ENCODE measurements at regions of chrX and their contacts with region 1.

Region 1: DNA sequence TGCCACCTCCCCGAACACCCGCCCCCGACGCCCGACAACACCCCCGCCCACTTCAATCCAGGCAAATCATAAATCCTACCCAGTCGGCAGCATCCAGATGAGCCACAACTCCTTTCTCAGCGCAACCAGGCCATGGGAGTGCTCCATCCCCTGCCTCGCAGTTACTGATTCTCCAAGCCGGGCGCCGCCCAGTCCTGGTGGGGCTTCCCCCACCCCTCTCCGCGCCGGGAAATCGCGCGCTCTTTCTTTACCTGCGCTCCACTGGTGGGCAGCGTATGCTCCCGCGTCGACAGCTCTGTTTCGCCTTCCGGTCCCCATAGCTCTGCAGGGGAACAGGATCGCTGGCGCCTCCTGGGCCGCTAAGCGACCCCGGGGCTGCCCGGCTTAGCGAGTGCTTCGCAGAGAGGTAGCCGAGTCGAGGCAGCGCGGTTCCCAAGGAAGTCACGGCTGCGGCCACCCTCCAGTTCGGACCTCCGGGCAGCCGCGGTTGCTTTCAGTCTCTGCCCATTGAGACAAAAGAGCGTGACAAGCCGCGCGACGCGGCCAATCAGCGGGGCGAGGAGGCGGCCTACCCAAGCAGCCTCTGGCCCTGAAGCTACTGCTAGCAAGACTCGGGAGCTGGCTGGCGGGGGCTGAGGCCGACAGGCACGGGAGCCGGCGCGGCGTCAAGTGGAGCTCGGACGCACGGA is 43.7 kb upstream of the TMSB15B start:
- DNase-seq: peak; percentile 62
- CTCF ChIP-seq: no peak

Region 2: DNA sequence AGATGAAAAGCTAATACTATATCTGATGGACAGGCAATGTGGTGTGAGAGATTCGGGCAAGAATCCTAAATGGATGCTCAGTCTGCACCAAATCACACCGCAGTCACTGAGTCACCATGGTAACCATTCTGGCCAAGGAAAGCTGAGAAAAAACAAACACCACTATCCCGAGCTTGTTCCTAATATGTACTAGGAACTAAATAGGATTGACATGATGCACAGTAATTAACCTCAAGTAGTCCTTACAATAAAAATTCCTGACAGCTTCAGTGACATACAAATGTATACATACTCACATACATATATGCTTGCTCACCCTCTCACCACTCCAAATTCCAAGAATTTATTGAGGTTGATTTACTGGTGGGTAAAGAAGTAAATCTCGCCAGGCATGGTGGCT is 398.3 kb before region 1 on chrX:
- CTCF ChIA-PET with region 1: no interaction called
- POLR2A ChIA-PET with region 1: no interaction called
- DNase-seq: no peak
- CTCF ChIP-seq: no peak

Region 3: GRCh38 chrX:103932133-103932532 is 13.4 kb after region 1 on chrX:
- CTCF ChIA-PET with region 1: interaction called, 36 read pairs
- POLR2A ChIA-PET with region 1: no interaction called
- DNase-seq: no peak
- CTCF ChIP-seq: no peak

Region 4: DNA sequence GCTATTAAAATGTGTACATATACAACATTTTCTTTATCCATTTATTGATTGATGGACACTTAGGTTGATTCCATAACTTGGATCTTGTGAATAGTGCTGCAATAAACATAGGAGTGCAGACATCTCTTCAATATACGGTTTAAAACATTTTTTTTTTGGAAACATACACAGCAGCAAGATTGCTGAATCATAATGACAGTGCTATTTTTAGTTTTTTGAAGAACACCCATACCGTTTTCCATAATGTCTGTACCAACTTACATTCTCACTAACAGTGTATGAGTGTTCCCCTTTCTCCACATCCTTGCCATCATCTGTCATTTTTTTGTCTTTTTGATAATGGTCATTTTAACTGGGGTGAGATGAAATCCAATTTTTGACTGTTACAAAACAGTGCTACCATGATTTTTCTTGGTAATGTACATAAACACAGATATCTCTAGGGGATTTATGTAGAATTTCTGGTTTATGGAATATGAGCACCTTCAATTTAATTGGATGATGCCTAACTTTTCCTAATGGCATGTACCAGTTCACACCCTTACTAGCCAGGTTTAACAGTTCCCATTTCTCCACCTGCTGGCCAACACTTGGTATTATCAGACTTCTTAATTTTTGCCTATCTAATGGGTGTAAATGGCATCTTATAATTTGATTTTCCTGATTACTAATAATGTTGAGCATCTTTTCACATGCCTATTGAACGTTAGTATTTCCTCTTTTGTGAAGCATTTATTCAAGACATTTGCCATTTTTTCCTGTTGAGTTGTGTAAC is 22.7 kb after region 1 on chrX:
- CTCF ChIA-PET with region 1: interaction called, 36 read pairs
- POLR2A ChIA-PET with region 1: no interaction called
- DNase-seq: no peak
- CTCF ChIP-seq: peak; percentile 17

Measured in GM10248 (cell line).